ENCODE measurements at regions of chr1 and their contacts with region 1.

Region 1: DNA sequence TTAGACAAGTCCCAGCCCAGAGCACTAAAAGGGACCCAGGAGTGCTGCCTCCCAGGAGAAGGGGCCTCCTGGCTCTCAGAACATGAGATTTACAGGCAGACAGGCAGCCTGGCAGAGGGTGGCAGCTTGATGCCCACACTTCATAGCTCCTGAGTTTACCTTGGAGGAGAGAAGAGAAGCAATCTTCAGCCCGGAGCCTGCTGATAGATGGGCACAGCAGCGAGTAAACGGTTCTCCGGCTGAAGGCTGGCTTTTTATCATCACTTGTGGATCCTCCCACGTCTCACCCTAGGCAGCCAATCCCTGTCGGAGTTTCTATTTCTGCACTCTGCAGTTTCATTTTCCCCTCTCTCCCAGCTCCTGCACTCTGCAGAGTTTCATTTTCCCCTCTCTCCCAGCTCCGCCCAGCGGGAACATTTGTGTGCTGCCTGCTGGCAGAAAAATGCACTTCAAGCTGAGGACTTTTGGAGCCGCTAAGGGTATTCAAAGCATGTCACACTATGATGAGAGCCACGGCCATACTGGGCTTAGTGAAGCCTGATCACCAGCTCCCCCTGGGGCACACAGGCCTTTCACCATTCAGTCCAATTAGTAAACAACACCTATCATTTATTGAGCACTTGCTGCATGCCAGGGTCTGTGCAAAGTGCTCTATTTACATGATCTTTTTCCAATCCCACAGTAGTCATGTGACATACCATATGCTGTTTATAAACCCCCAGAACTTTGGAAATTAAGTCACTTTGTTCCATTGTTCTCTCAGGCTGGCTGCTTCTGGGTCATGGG is at the start of gene IFI6:
- DNase-seq: peak; percentile 60
- ATAC-seq: peak; percentile 84
- H3K4me3 Mint-ChIP-seq: peak within 1 kb of the TSS; percentile 75
- H3K27ac Mint-ChIP-seq: peak within 1 kb of the TSS; percentile 94
- H3K4me1 Mint-ChIP-seq: peaks cover 12% of the 10 kb centered on the region
- H3K27me3 Mint-ChIP-seq: peaks cover 19% of the 10 kb centered on the region
- CTCF ChIP-seq: no peak
- total RNA-seq, gene IFI6: 4.5 to 9.4 TPM (median 6.4 TPM) in 3 replicates

Region 2: DNA sequence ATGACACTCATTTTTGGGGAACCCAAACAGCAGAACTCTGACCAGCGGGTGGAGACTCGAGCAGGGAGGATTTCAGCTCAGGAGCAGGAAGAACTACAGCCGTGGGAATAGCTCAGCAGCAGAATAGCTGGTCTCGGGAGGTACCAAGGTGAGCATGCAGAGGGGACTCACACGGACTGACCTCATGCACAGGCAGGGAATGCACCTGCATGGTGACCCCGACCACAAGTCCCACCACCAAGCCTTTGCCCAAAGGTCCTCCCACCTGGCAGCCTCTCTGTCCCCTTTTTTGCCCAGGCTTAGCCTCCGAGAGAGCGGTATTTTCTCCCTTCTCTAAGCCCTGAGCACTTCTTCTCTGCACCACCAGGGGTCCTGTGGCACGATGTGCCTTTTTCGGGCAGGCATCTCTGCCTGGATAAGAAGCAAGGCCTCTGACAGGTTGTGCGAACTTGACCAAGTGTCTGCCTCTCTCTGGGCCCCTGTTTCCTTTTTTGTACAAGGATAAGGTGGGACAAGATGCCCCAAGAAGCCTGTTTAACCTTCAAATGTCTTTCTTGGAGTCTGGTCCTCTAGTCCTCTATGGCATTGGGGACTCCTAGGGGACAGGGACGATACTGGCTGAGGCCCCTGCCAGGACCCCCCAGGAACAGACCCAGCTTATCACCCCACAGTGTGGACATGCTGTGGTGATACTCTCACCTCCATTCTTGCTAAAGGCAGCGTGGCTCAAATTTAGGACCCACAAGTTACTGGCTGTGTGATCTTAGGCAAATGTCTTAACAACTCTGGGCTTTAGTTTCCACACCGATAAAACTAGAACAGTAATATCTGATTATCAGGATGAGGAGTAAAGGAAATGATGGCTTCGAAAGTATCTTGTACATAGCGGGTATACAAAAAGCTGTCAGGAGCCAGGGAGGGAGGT is 28.2 kb before region 1 on chr1:
- CTCF ChIA-PET with region 1: interaction called, 16 read pairs
- POLR2A ChIA-PET with region 1: no interaction called
- DNase-seq: peak; percentile 75
- ATAC-seq: peak; percentile 96
- H3K4me3 Mint-ChIP-seq: no peak overlapping the region
- H3K27ac Mint-ChIP-seq: no peak overlapping the region
- H3K4me1 Mint-ChIP-seq: peaks cover 6% of the 10 kb centered on the region
- H3K27me3 Mint-ChIP-seq: no peaks in the 10 kb centered on the region
- CTCF ChIP-seq: peak; percentile 79

Region 3: GRCh38 chr1:27656157-27656893 is 15.8 kb before region 1 on chr1:
- CTCF ChIA-PET with region 1: interaction called, 16 read pairs
- POLR2A ChIA-PET with region 1: no interaction called
- DNase-seq: peak; percentile 70
- ATAC-seq: peak; percentile 57
- H3K4me3 Mint-ChIP-seq: no peak overlapping the region
- H3K27ac Mint-ChIP-seq: peak overlapping the region; percentile 79
- H3K4me1 Mint-ChIP-seq: peaks cover 37% of the 10 kb centered on the region
- H3K27me3 Mint-ChIP-seq: peaks cover 3% of the 10 kb centered on the region; the same call in 1 of the 2 replicates
- CTCF ChIP-seq: no peak

Region 4: GRCh38 chr1:27719286-27720251 is 47.4 kb after region 1 on chr1:
- CTCF ChIA-PET with region 1: interaction called, 83 read pairs
- POLR2A ChIA-PET with region 1: no interaction called
- DNase-seq: no peak
- ATAC-seq: no peak
- H3K4me3 Mint-ChIP-seq: no peak overlapping the region
- H3K27ac Mint-ChIP-seq: no peak overlapping the region
- H3K4me1 Mint-ChIP-seq: peaks cover 1% of the 10 kb centered on the region
- H3K27me3 Mint-ChIP-seq: peaks cover 9% of the 10 kb centered on the region
- CTCF ChIP-seq: no peak

Region 5: GRCh38 chr1:27772933-27773825 is 101.0 kb after region 1 on chr1 and contains the start of gene STX12:
- CTCF ChIA-PET with region 1: interaction called, 28 read pairs
- POLR2A ChIA-PET with region 1: interaction called, 5 read pairs
- DNase-seq: peak; percentile 99
- ATAC-seq: peak; percentile 98
- H3K4me3 Mint-ChIP-seq: peak within 1 kb of the TSS; percentile 79
- H3K27ac Mint-ChIP-seq: peak within 1 kb of the TSS; percentile 92
- H3K4me1 Mint-ChIP-seq: peaks cover 12% of the 10 kb centered on the region
- H3K27me3 Mint-ChIP-seq: no peaks in the 10 kb centered on the region; the same call in 1 of the 2 replicates
- CTCF ChIP-seq: no peak
- total RNA-seq, gene STX12: 10.1 to 10.8 TPM (median 10.3 TPM) in 3 replicates